GM10248 (cell line): ENCODE measurements at regions of chr20 and their contacts with region 1.

Region 1: GRCh38 chr20:16821211-16822089 is 73.3 kb downstream of the OTOR start:
- DNase-seq: peak; percentile 38
- CTCF ChIP-seq: peak; percentile 81

Region 2: GRCh38 chr20:16810216-16810615 is 11.2 kb before region 1 on chr20:
- CTCF ChIA-PET with region 1: interaction called, 97 read pairs
- POLR2A ChIA-PET with region 1: no interaction called
- DNase-seq: no peak
- CTCF ChIP-seq: no peak